ENCODE measurements at regions of chr1 and their contacts with region 1.

Region 1: GRCh38 chr1:39816415-39817090 is 27.9 kb upstream of the BMP8B start:
- DNase-seq: peak; percentile 73
- H3K4me3 Mint-ChIP-seq: peak overlapping the region; percentile 15
- H3K27ac Mint-ChIP-seq: no peak overlapping the region
- H3K4me1 Mint-ChIP-seq: peaks cover 10% of the 10 kb centered on the region
- H3K27me3 Mint-ChIP-seq: peaks cover 3% of the 10 kb centered on the region

Region 2: GRCh38 chr1:39788758-39789570 is 27.6 kb before region 1 on chr1 and contains the start of gene BMP8B:
- CTCF ChIA-PET with region 1: no interaction called
- intact Hi-C with region 1: no loop called
- DNase-seq: peak; percentile 42
- H3K4me3 Mint-ChIP-seq: peak within 1 kb of the TSS; percentile 63
- H3K27ac Mint-ChIP-seq: no peak within 1 kb of the TSS
- H3K4me1 Mint-ChIP-seq: no peaks in the 10 kb centered on the region
- H3K27me3 Mint-ChIP-seq: peaks cover 28% of the 10 kb centered on the region
- total RNA-seq, gene BMP8B: 0.12 to 0.14 TPM

Region 3: GRCh38 chr1:39901698-39902459 is 85.3 kb after region 1 on chr1 and contains the start of gene MYCL:
- CTCF ChIA-PET with region 1: interaction called, 62 read pairs
- intact Hi-C with region 1: loop called (anchors 1 kb)
- DNase-seq: peak; percentile 73
- H3K4me3 Mint-ChIP-seq: peak within 1 kb of the TSS; percentile 65
- H3K27ac Mint-ChIP-seq: no peak within 1 kb of the TSS
- H3K4me1 Mint-ChIP-seq: peaks cover 8% of the 10 kb centered on the region
- H3K27me3 Mint-ChIP-seq: peaks cover 46% of the 10 kb centered on the region
- total RNA-seq, gene MYCL: 0.19 TPM in 1 of 2 experiments, not detected in the other

Region 4: GRCh38 chr1:39919545-39919944 is 103.0 kb after region 1 on chr1:
- CTCF ChIA-PET with region 1: interaction called, 15 read pairs
- intact Hi-C with region 1: loop called (anchors 1 kb)
- DNase-seq: peak; percentile 61
- H3K4me3 Mint-ChIP-seq: no peak overlapping the region
- H3K27ac Mint-ChIP-seq: no peak overlapping the region
- H3K4me1 Mint-ChIP-seq: peaks cover 2% of the 10 kb centered on the region
- H3K27me3 Mint-ChIP-seq: no peaks in the 10 kb centered on the region

Region 5: GRCh38 chr1:39954816-39955546 is 138.4 kb after region 1 on chr1 and contains the start of gene MFSD2A:
- CTCF ChIA-PET with region 1: interaction called, 3 read pairs
- intact Hi-C with region 1: loop called (anchors 1 kb)
- DNase-seq: peak; percentile 89
- H3K4me3 Mint-ChIP-seq: peak within 1 kb of the TSS; percentile 88
- H3K27ac Mint-ChIP-seq: peak within 1 kb of the TSS; percentile 77
- H3K4me1 Mint-ChIP-seq: peaks cover 33% of the 10 kb centered on the region
- H3K27me3 Mint-ChIP-seq: no peaks in the 10 kb centered on the region
- total RNA-seq, gene MFSD2A: 4.0 to 4.5 TPM

Region 6: GRCh38 chr1:40032240-40032891 is 215.8 kb after region 1 on chr1:
- CTCF ChIA-PET with region 1: interaction called, 5 read pairs
- intact Hi-C with region 1: loop called (anchors 2 kb)
- DNase-seq: peak; percentile 76
- H3K4me3 Mint-ChIP-seq: no peak overlapping the region
- H3K27ac Mint-ChIP-seq: no peak overlapping the region
- H3K4me1 Mint-ChIP-seq: peaks cover 36% of the 10 kb centered on the region
- H3K27me3 Mint-ChIP-seq: no peaks in the 10 kb centered on the region

Measured in activated naive CD4-positive, alpha-beta T cell treated with anti-CD3 and anti-CD28 coated beads for 36 hours (primary cell).